ENCODE measurements at regions of chr7 and their contacts with region 1.

Region 1: DNA sequence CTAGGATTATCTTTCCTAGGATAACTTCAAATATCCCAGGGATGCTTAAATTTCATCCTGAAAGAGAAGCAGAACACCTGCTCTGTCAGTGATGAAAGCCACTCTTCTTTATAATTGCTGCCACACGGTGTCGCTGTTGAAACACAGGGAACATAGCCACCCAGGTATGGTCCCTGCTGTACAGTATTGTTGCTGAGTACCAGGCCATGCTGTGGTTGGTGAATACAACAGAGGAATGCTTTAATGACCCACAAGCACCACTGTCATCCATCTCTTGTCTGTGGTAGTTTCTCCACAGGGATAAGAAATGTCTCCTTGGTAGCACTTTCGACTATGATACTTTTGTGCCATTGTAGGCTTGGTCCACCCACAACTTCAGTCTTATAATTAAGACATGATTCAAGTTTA is 70.6 kb upstream of the STARD3NL start:
- H3K4me3 ChIP-seq: no peak overlapping the region
- H3K27ac ChIP-seq: no peak overlapping the region
- H3K4me1 ChIP-seq: no peaks in the 10 kb centered on the region
- CTCF ChIP-seq: no peak

Region 2: DNA sequence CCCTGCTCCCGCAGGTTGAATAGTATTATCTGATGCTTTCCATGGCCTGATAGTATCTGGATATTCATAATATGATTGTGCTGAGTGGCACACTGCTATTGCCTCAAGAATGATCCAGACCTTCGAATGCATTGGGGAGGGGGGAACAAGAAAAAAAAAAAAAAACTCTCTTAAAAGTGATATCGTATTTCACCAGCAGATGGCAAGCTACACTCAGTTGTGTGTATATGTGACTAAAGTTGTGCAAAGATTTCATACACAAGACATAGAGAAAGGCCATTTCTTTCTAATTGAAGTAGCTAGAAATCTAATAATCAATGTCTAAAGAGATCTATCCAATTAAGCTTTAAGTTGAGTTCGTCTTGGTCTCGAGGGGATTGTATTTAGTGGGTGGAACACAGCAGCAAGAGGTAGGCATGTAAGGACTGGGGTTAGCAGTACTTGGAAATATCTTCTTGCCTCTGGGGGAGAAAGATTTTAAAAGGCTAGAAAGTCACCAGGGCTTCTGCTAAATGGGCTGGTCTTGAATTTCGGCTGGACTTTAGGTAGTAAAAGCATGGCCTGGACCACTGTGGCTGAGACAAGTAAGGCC is 206.2 kb before region 1 on chr7:
- CTCF ChIA-PET with region 1: interaction called, 13 read pairs
- POLR2A ChIA-PET with region 1: no interaction called
- H3K4me3 ChIP-seq: no peak overlapping the region
- H3K27ac ChIP-seq: no peak overlapping the region
- H3K4me1 ChIP-seq: no peaks in the 10 kb centered on the region
- CTCF ChIP-seq: peak; percentile 44; the same call in 1 of the 2 replicates

Region 3: DNA sequence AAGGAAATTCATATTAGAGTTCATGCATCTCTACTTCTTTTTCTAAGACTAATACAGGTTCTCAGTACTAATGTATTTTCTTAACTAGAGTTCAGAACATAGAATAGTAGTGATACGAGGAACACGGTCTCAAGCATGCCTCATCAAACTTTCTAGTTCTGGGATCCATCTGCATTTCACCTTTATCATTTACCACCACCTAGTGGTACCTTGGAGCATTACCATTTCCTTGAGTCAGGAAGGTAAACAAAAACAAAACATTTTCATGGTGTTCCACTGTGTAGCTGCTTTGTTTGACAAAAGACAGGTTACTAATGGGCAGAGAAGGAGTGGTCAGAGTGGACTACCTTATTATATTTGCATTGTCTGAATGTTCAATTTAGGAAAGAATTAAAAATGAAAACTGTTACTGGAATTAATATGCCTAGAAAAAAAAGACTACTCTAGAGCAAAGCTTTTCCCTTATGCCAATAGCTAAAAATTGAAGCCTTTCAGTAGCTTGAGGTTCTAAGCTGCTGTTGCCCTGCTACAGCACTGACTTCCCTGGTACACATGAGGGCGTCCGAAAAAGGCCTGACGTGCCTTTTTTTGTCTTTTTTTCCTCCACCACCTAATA is 115.1 kb after region 1 on chr7:
- CTCF ChIA-PET with region 1: interaction called, 53 read pairs
- POLR2A ChIA-PET with region 1: no interaction called
- H3K4me3 ChIP-seq: no peak overlapping the region
- H3K27ac ChIP-seq: no peak overlapping the region
- H3K4me1 ChIP-seq: no peaks in the 10 kb centered on the region
- CTCF ChIP-seq: 0 out of 2 replicates have a peak, but pooled peaks have one; percentile 27

Region 4: GRCh38 chr7:38318803-38319416 is 211.4 kb after region 1 on chr7:
- CTCF ChIA-PET with region 1: interaction called, 16 read pairs
- POLR2A ChIA-PET with region 1: no interaction called
- H3K4me3 ChIP-seq: no peak overlapping the region
- H3K27ac ChIP-seq: no peak overlapping the region
- H3K4me1 ChIP-seq: no peaks in the 10 kb centered on the region; the same call in 1 of the 2 replicates
- CTCF ChIP-seq: peak; percentile 75

Region 5: GRCh38 chr7:38369816-38370493 is 262.5 kb after region 1 on chr7:
- CTCF ChIA-PET with region 1: interaction called, 11 read pairs
- POLR2A ChIA-PET with region 1: no interaction called
- H3K4me3 ChIP-seq: no peak overlapping the region
- H3K27ac ChIP-seq: no peak overlapping the region
- H3K4me1 ChIP-seq: no peaks in the 10 kb centered on the region
- CTCF ChIP-seq: no peak

Measured in HEK293 (cell line).